Gastrocnemius medialis (tissue), 4 donors: ENCODE measurements at regions of chr15 and their contacts with region 1.

Region 1: GRCh38 chr15:42929306-42929848 is 8.8 kb upstream of the TTBK2 start:
- DNase-seq: no peak
- ATAC-seq: no peak
- H3K4me3 ChIP-seq: no peak overlapping the region
- H3K27ac ChIP-seq: no peak overlapping the region
- H3K4me1 ChIP-seq: no peaks in the 10 kb centered on the region
- H3K27me3 ChIP-seq: no peaks in the 10 kb centered on the region
- CTCF ChIP-seq: no peak
- POLR2A ChIP-seq: no peak

Region 2: GRCh38 chr15:42421376-42421775 is 508.0 kb before region 1 on chr15:
- in situ Hi-C with region 1: no loop called
- intact Hi-C with region 1: no loop called
- DNase-seq: peak; percentile 31 to 74
- ATAC-seq: peak; percentile 87 to 92
- H3K4me3 ChIP-seq: no peak overlapping the region
- H3K27ac ChIP-seq: peak overlapping the region; percentile 80 to 92 (median 88)
- H3K4me1 ChIP-seq: peaks cover 38 to 43% of the 10 kb centered on the region in 2 donors
- H3K27me3 ChIP-seq: no peaks in the 10 kb centered on the region
- CTCF ChIP-seq: no peak
- POLR2A ChIP-seq: no peak

Region 3: DNA sequence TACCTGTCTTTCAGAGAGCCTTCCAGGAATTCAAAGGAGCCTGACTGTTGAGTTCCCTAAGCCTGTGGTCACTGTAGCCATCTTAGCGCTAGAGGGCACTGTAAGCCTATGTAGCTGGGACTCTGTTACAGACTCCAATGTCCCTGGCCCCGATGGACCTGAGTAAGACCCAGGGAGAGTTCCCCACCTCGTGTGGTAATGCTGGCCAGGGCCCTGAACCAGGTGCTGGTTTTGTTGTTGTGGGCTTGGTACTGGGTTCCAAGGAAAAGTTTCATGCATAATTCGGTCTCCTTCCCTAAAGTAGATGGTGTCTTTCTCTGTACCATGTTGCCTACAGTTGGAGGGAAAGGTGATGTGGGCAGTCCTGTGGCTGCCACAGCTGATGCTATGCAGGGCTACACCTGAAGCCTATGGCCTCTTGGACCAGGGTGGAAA is 224.9 kb before region 1 on chr15:
- in situ Hi-C with region 1: loop called in 3 of 4 experiments (anchors 5 to 10 kb)
- intact Hi-C with region 1: loop called (anchors 1 kb)
- DNase-seq: peak; percentile 25 to 55
- ATAC-seq: peak; percentile 89 to 98
- H3K4me3 ChIP-seq: no peak overlapping the region
- H3K27ac ChIP-seq: no peak overlapping the region
- H3K4me1 ChIP-seq: no peaks in the 10 kb centered on the region
- H3K27me3 ChIP-seq: no peaks in the 10 kb centered on the region
- CTCF ChIP-seq: peak; percentile 50 to 87 (median 73)
- POLR2A ChIP-seq: no peak

Region 4: GRCh38 chr15:42710662-42711061 is 218.7 kb before region 1 on chr15:
- in situ Hi-C with region 1: loop called in 3 of 4 experiments (anchors 5 to 10 kb)
- intact Hi-C with region 1: no loop called
- DNase-seq: no peak
- ATAC-seq: no peak
- H3K4me3 ChIP-seq: no peak overlapping the region
- H3K27ac ChIP-seq: no peak overlapping the region
- H3K4me1 ChIP-seq: no peaks in the 10 kb centered on the region
- H3K27me3 ChIP-seq: no peaks in the 10 kb centered on the region
- CTCF ChIP-seq: no peak
- POLR2A ChIP-seq: no peak

Region 5: DNA sequence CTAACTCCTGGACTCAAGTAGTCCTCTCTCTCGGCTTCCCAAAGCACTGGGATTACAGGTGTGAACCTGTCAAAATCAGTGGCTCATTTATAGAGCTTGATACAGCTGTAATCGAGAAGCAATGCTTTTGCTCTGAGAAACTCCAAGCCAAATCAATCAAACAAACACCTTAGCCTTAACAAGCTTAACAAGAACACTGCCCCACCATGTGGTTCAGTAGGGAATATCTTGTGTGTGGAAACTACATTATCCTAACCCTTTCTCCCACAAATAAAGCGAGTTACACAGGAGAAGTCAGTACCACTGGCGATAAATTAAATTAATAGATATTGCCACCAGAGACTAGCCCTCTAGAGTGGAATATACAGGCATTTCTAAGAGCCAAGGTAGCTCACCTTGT is 206.3 kb before region 1 on chr15:
- in situ Hi-C with region 1: no loop called
- intact Hi-C with region 1: no loop called
- DNase-seq: no peak
- ATAC-seq: no peak
- H3K4me3 ChIP-seq: no peak overlapping the region
- H3K27ac ChIP-seq: no peak overlapping the region
- H3K4me1 ChIP-seq: no peaks in the 10 kb centered on the region
- H3K27me3 ChIP-seq: no peaks in the 10 kb centered on the region
- CTCF ChIP-seq: no peak
- POLR2A ChIP-seq: no peak

Region 6: DNA sequence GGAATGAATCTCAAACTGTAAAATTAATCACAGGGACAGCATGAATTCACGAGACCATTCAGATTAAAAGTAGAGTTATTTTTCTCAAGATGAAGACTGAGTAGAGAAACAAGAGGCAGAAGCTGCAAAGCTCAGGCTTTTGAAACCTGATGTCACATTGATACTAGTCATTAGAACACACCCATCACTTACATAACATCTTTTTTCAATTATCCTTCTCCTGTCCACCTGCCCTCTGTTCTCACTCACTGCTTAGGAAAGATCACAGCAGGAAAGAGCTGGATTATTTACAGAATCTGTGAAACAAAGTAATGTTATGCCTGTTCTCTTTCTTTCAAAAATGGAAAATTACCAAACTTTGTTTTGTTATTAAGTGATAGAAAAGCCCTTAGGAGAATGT is 120.5 kb before region 1 on chr15:
- in situ Hi-C with region 1: no loop called
- intact Hi-C with region 1: loop called (anchors 5 kb)
- DNase-seq: no peak
- ATAC-seq: no peak
- H3K4me3 ChIP-seq: no peak overlapping the region
- H3K27ac ChIP-seq: no peak overlapping the region
- H3K4me1 ChIP-seq: no peaks in the 10 kb centered on the region
- H3K27me3 ChIP-seq: no peaks in the 10 kb centered on the region
- CTCF ChIP-seq: no peak
- POLR2A ChIP-seq: no peak

Region 7: DNA sequence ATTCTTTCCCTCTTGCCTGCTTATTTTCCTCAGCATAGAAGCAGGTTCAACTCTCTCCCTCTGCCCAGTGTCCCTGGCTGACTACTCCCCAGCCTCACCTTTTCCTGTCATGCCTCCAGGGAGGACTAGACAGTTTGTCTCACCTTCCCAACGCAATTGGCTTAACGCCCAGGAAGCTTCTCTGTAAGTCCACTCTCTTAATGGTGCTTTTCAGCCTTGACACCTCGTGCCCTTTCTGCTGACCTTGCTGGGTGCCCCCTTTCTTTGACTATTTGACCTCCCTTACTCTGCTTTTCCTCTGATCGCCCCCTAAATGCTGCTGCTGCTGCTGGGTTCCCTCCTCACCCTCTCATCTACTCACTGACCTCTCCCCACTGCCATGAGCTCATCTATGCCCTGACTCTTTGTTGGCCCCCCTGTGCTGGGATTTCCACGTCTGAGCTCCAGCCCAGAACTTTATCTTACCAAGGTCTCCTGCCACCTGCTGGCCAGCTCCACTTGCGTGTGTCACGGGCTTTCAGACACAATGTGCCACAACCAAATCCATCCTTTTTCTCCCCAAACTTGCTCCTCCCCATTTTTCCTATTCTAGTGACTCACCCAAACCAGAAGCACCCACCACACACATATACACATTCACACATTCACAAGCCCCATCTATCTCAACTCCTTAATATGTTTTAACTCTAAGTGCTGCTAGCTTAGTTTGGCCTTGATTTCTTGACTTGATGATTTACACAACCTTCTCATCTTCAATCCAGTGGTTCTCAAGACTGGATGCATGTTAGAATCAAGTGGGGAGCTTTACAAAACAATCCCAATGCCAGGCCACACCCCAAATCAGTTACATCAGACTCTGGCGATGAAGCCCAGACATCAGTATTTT is 274.9 kb after region 1 on chr15:
- in situ Hi-C with region 1: no loop called
- intact Hi-C with region 1: no loop called
- DNase-seq: peak in 1 of 2 donors; percentile 34
- ATAC-seq: peak in 1 of 2 donors; percentile 74
- H3K4me3 ChIP-seq: no peak overlapping the region
- H3K27ac ChIP-seq: no peak overlapping the region
- H3K4me1 ChIP-seq: peaks cover 0 to 5% of the 10 kb centered on the region in 2 donors
- H3K27me3 ChIP-seq: no peaks in the 10 kb centered on the region
- CTCF ChIP-seq: peak; percentile 26 to 66 (median 63)
- POLR2A ChIP-seq: no peak